ENCODE measurements at regions of chr19 and their contacts with region 1.

Region 1: DNA sequence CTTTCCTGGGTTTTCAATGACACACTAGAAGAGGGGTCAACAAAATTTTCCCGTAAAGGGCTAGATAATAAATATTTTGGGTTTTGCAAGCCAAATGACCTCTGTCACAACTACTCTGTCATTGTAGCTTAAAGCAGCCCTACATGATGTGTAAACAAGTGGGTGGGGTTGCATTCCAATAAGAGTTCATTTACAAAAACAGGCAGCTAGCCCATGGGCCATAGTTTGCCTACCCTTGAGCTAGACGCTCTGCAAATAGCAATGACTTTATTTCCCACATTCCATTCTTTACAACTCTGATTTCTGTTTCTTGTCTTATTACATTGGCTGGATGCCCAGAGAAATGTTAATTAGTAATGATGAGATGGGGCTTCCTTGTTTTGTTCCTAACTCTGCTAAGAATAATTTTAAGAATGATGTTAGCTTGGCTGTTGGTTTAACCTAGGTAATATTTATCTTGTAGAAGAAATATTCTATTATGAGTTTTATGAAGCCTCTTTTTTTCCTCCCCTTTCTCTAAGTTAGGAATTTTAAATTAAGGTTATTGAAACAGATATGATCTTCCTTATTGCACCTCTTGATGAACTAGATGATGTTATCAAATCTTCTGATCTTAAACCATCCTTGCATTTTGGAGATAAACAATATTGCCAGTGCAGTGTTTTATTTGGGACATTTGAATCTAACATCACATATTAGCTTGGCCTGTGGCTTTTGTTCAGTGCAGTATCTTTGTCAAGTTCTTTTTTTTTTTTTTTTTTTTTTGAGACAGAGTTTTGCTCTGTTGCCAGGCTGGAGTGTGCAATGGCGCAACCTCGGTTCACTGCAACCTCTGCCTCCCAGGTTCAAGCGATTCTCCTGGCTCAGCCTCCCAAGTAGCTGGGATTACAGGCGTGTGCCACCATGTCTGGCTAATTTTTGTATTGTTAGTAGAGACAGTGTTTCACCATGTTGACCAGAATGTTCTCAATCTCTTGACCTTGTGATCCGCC is 76.3 kb downstream of the ZNF557 start:
- DNase-seq: no peak
- ATAC-seq: no peak
- H3K4me3 ChIP-seq: no peak overlapping the region
- H3K4me3 Mint-ChIP-seq: no peak overlapping the region
- H3K27ac ChIP-seq: no peak overlapping the region
- H3K27ac Mint-ChIP-seq: no peak overlapping the region
- H3K4me1 ChIP-seq: no peaks in the 10 kb centered on the region
- H3K4me1 Mint-ChIP-seq: no peaks in the 10 kb centered on the region
- H3K27me3 ChIP-seq: no peaks in the 10 kb centered on the region
- H3K27me3 Mint-ChIP-seq: no peaks in the 10 kb centered on the region
- CTCF ChIP-seq: no peak

Region 2: GRCh38 chr19:7104747-7105447 is 40.9 kb before region 1 on chr19:
- CTCF ChIA-PET with region 1: interaction called, 3 read pairs
- POLR2A ChIA-PET with region 1: no interaction called
- intact Hi-C with region 1: loop called in 1 of 2 experiments (anchors 5 kb)
- DNase-seq: peak in 1 of 14 experiments; percentile 10
- ATAC-seq: no peak
- H3K4me3 ChIP-seq: no peak overlapping the region
- H3K4me3 Mint-ChIP-seq: no peak overlapping the region
- H3K27ac ChIP-seq: no peak overlapping the region
- H3K27ac Mint-ChIP-seq: no peak overlapping the region
- H3K4me1 ChIP-seq: peaks cover 10% of the 10 kb centered on the region
- H3K4me1 Mint-ChIP-seq: peaks cover 22% of the 10 kb centered on the region
- H3K27me3 ChIP-seq: no peaks in the 10 kb centered on the region
- H3K27me3 Mint-ChIP-seq: no peaks in the 10 kb centered on the region
- CTCF ChIP-seq: no peak

Region 3: DNA sequence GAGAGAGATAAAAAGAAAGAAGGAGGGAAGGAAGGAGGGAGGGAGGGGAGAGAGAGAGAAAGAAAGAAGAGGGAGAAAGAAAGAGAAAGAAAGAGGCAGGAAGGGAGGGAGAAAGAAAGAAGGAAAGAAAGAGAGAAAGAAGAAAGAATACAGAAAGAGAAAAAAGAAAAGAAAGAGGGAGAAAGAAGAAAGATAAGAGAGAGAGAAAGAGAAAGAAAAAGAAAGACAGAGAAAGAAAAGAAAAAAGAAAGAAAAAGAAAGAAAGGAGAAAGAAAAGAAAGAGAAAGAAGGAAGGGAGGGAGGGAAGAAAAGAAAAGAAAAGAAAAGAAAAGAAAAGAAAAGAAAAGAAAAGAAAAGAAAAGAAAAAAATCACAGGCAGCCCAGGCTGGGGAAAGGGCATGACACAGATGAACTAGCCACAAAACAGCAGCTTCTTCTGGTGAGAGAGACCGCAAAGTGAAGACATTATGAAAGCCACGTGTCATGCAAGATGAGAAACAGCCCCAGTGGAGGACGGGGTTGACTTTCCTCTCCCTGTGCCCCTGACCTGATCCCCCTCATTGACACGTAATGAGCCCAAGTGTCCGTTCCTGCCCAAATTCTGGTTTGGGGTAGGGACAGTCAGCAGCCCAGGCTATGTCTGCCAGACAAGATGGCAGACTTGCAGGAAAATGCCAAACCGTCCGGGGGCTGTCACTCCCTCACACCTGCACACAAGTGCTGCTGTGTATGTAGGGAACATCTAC is 46.3 kb after region 1 on chr19:
- CTCF ChIA-PET with region 1: no interaction called
- POLR2A ChIA-PET with region 1: no interaction called
- intact Hi-C with region 1: loop called in 1 of 2 experiments (anchors 5 kb)
- DNase-seq: peak; percentile 12 to 80 (median 30)
- ATAC-seq: peak; percentile 76
- H3K4me3 ChIP-seq: peak overlapping the region; percentile 8
- H3K4me3 Mint-ChIP-seq: peak overlapping the region; percentile 14
- H3K27ac ChIP-seq: no peak overlapping the region
- H3K27ac Mint-ChIP-seq: peak overlapping the region; percentile 35
- H3K4me1 ChIP-seq: peaks cover 26% of the 10 kb centered on the region
- H3K4me1 Mint-ChIP-seq: peaks cover 22% of the 10 kb centered on the region
- H3K27me3 ChIP-seq: no peaks in the 10 kb centered on the region
- H3K27me3 Mint-ChIP-seq: peaks cover under 1% of the 10 kb centered on the region
- CTCF ChIP-seq: no peak

Region 4: GRCh38 chr19:7376151-7376852 is 230.5 kb after region 1 on chr19:
- CTCF ChIA-PET with region 1: no interaction called
- POLR2A ChIA-PET with region 1: no interaction called
- intact Hi-C with region 1: loop called in 1 of 2 experiments (anchors 1 kb)
- DNase-seq: no peak
- ATAC-seq: no peak
- H3K4me3 ChIP-seq: no peak overlapping the region
- H3K4me3 Mint-ChIP-seq: no peak overlapping the region
- H3K27ac ChIP-seq: peak overlapping the region in 1 of 2 donors; percentile 35
- H3K27ac Mint-ChIP-seq: no peak overlapping the region
- H3K4me1 ChIP-seq: peaks cover 8% of the 10 kb centered on the region
- H3K4me1 Mint-ChIP-seq: peaks cover 8% of the 10 kb centered on the region
- H3K27me3 ChIP-seq: no peaks in the 10 kb centered on the region
- H3K27me3 Mint-ChIP-seq: no peaks in the 10 kb centered on the region
- CTCF ChIP-seq: no peak